ENCODE measurements at regions of chr2 and their contacts with region 1.

Region 1: GRCh38 chr2:238231251-238231793 is 8.5 kb downstream of the HES6 start:
- DNase-seq: peak; percentile 86
- ATAC-seq: peak; percentile 77
- H3K4me3 ChIP-seq: peak overlapping the region; percentile 6 to 84 (median 67)
- H3K4me3 Mint-ChIP-seq: peak overlapping the region; percentile 94
- H3K27ac ChIP-seq: peak overlapping the region in 1 of 2 donors; percentile 35
- H3K27ac Mint-ChIP-seq: peak overlapping the region; percentile 15
- H3K4me1 ChIP-seq: peaks cover 7 to 18% of the 10 kb centered on the region in 2 donors
- H3K4me1 Mint-ChIP-seq: peaks cover 27% of the 10 kb centered on the region
- H3K27me3 ChIP-seq: peaks cover 0 to 17% (median 5%) of the 10 kb centered on the region in 4 experiments
- H3K27me3 Mint-ChIP-seq: peaks cover 31% of the 10 kb centered on the region
- CTCF ChIP-seq: no peak

Region 2: GRCh38 chr2:237966565-237967462 is 264.5 kb before region 1 on chr2 and contains the start of gene UBE2F:
- CTCF ChIA-PET with region 1: no interaction called
- POLR2A ChIA-PET with region 1: no interaction called
- intact Hi-C with region 1: no loop called
- DNase-seq: peak; percentile 97
- ATAC-seq: peak; percentile 94
- H3K4me3 ChIP-seq: peak within 1 kb of the TSS; percentile 54 to 96 (median 73)
- H3K4me3 Mint-ChIP-seq: peak within 1 kb of the TSS; percentile 81
- H3K27ac ChIP-seq: peak within 1 kb of the TSS; percentile 45 to 50
- H3K27ac Mint-ChIP-seq: peak within 1 kb of the TSS; percentile 88
- H3K4me1 ChIP-seq: peaks cover 27 to 32% of the 10 kb centered on the region in 2 donors
- H3K4me1 Mint-ChIP-seq: peaks cover 36% of the 10 kb centered on the region
- H3K27me3 ChIP-seq: no peaks in the 10 kb centered on the region
- H3K27me3 Mint-ChIP-seq: no peaks in the 10 kb centered on the region
- CTCF ChIP-seq: no peak
- total RNA-seq, gene UBE2F: 56.6 and 57.6 TPM in 2 replicates

Region 3: DNA sequence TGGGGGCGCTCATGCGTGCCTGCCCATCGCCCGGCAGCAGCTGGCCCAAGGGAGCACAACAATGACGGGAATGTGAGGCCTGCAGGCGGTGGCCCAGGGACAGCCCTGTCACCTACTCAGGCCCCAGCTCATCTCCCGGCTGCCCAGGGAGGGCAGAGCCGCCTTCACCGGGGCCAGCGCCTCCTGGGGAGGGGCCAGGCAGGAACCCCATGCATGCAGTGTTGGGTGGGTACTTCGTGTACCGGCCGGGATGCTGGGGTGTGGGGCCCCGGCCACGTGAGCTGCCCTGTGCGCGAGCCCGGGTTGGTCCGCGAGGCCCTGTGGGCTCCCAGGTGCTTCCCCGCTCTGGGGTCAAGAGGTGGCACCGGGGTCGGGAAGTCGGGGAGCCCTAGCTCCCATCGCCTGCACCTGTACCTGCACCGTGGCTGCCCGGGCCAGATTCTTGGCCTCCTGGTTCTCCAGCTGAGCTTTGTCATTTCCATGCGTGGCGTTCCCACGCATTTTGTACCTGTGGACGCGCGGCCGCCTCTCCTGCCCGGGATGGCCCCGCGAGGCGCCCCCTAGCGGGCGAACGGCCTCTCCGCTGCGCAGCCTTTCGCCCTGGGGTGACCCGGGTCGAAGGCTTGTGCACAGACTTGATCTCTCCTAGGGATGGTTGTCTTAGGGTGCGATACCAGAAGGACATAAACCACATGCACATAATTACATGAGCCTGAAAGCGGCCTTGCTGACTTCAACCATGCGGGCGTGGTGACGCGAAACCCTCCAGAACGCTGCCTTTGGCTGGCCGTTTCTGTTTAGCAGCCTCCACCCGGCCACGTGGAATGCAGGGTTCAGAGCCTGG is 91.9 kb before region 1 on chr2:
- CTCF ChIA-PET with region 1: no interaction called
- POLR2A ChIA-PET with region 1: no interaction called
- intact Hi-C with region 1: no loop called
- DNase-seq: peak; percentile 48
- ATAC-seq: peak; percentile 46
- H3K4me3 ChIP-seq: peak overlapping the region in 2 of 5 experiments; percentile 23 to 33
- H3K4me3 Mint-ChIP-seq: peak overlapping the region; percentile 50
- H3K27ac ChIP-seq: no peak overlapping the region
- H3K27ac Mint-ChIP-seq: no peak overlapping the region
- H3K4me1 ChIP-seq: peaks cover 16 to 26% of the 10 kb centered on the region in 2 donors
- H3K4me1 Mint-ChIP-seq: peaks cover 12% of the 10 kb centered on the region
- H3K27me3 ChIP-seq: peaks cover 0 to 7% (median 1%) of the 10 kb centered on the region in 4 experiments
- H3K27me3 Mint-ChIP-seq: no peaks in the 10 kb centered on the region
- CTCF ChIP-seq: peak; percentile 61

Region 4: DNA sequence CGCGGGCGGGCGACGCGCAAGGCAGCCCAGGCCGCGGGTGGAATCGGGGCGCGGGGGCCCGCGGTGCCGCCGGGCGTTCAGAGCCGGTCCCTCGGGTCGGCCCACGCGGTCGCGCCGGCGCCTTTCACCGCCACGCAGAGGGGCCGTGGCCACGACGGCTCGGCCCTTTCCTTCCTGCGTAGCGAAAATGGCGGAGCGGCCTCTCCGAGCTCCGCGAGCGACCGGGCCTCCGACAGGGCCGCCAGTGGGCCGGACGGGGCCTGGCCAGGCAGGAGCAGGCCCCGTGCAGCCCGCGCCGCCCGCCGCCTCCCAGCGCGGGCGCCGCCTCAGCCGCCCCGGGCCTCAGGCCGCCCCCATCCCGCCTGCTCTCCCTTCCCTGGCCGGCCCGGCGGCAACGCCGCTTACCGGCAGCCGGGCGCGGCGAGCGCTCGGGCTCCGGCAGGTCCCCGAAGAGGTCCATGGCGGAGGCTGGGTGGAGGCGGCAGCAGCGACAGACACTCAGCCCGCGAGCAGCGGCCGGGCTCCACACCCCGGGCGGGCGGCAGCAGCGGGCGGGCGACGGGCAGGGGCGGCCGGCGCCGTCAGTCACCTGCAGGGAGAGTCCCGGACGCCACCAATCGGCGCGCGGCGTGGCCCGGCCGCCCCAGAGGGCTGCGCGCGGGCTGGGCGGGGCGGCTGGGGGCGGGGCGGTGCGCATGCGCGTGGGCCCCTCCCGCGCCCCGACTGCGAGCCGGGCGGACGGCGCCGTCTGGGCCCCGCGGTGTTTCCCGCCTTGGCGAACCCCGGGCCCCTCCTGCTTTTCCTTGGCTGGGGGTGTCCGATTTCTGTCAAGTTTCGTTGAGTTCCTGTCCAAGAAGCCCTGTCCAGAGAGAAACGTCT is 28.0 kb before region 1 on chr2 and contains the start of gene ILKAP:
- CTCF ChIA-PET with region 1: no interaction called
- POLR2A ChIA-PET with region 1: interaction called, 3 read pairs
- intact Hi-C with region 1: loop called (anchors 1 kb)
- DNase-seq: peak; percentile 93
- ATAC-seq: peak; percentile 97
- H3K4me3 ChIP-seq: peak within 1 kb of the TSS; percentile 46 to 72 (median 58)
- H3K4me3 Mint-ChIP-seq: peak within 1 kb of the TSS; percentile 86
- H3K27ac ChIP-seq: peak within 1 kb of the TSS; percentile 78 to 93
- H3K27ac Mint-ChIP-seq: peak within 1 kb of the TSS; percentile 91
- H3K4me1 ChIP-seq: peaks cover 23 to 31% of the 10 kb centered on the region in 2 donors
- H3K4me1 Mint-ChIP-seq: peaks cover 47% of the 10 kb centered on the region
- H3K27me3 ChIP-seq: peaks cover 0 to 8% (median 0%) of the 10 kb centered on the region in 4 experiments
- H3K27me3 Mint-ChIP-seq: no peaks in the 10 kb centered on the region
- CTCF ChIP-seq: no peak
- total RNA-seq, gene ILKAP: 98.6 and 102 TPM in 2 replicates